Breast epithelium (tissue), 4 donors: ENCODE measurements at regions of chr3 and their contacts with region 1.

Region 1: GRCh38 chr3:117736846-117737245 is 1027.3 kb downstream of the TUSC7 start:
- DNase-seq: no peak
- H3K4me3 ChIP-seq: no peak overlapping the region
- H3K27ac ChIP-seq: no peak overlapping the region
- H3K4me1 ChIP-seq: no peaks in the 10 kb centered on the region
- H3K27me3 ChIP-seq: no peaks in the 10 kb centered on the region
- CTCF ChIP-seq: no peak
- POLR2A ChIP-seq: no peak

Region 2: GRCh38 chr3:117750674-117751269 is 13.9 kb after region 1 on chr3:
- intact Hi-C with region 1: loop called (anchors 1 kb)
- DNase-seq: no peak
- H3K4me3 ChIP-seq: no peak overlapping the region
- H3K27ac ChIP-seq: no peak overlapping the region
- H3K4me1 ChIP-seq: no peaks in the 10 kb centered on the region
- H3K27me3 ChIP-seq: no peaks in the 10 kb centered on the region
- CTCF ChIP-seq: no peak
- POLR2A ChIP-seq: no peak